ENCODE measurements at regions of chr14 and their contacts with region 1.

Region 1: GRCh38 chr14:95442633-95443021 is 73.8 kb downstream of the SYNE3 start:
- DNase-seq: peak; percentile 76
- H3K4me3 ChIP-seq: no peak overlapping the region
- H3K27ac ChIP-seq: no peak overlapping the region
- H3K4me1 ChIP-seq: no peaks in the 10 kb centered on the region
- H3K27me3 ChIP-seq: no peaks in the 10 kb centered on the region
- CTCF ChIP-seq: peak; percentile 91
- POLR2A ChIP-seq: no peak

Region 2: GRCh38 chr14:95431199-95432143 is 11.2 kb before region 1 on chr14:
- CTCF ChIA-PET with region 1: interaction called, 28 read pairs
- POLR2A ChIA-PET with region 1: no interaction called
- dilution Hi-C with region 1: no loop called
- intact Hi-C with region 1: no loop called
- DNase-seq: peak; percentile 27
- H3K4me3 ChIP-seq: no peak overlapping the region
- H3K27ac ChIP-seq: no peak overlapping the region
- H3K4me1 ChIP-seq: no peaks in the 10 kb centered on the region
- H3K27me3 ChIP-seq: no peaks in the 10 kb centered on the region
- CTCF ChIP-seq: peak; percentile 40 to 50
- POLR2A ChIP-seq: no peak

Region 3: GRCh38 chr14:95483309-95484165 is 40.9 kb after region 1 on chr14:
- CTCF ChIA-PET with region 1: interaction called, 18 read pairs
- POLR2A ChIA-PET with region 1: no interaction called
- dilution Hi-C with region 1: no loop called
- intact Hi-C with region 1: no loop called
- DNase-seq: peak; percentile 98
- H3K4me3 ChIP-seq: no peak overlapping the region
- H3K27ac ChIP-seq: peak overlapping the region; percentile 18
- H3K4me1 ChIP-seq: peaks cover 13% of the 10 kb centered on the region
- H3K27me3 ChIP-seq: no peaks in the 10 kb centered on the region
- CTCF ChIP-seq: no peak
- POLR2A ChIP-seq: no peak

Region 4: DNA sequence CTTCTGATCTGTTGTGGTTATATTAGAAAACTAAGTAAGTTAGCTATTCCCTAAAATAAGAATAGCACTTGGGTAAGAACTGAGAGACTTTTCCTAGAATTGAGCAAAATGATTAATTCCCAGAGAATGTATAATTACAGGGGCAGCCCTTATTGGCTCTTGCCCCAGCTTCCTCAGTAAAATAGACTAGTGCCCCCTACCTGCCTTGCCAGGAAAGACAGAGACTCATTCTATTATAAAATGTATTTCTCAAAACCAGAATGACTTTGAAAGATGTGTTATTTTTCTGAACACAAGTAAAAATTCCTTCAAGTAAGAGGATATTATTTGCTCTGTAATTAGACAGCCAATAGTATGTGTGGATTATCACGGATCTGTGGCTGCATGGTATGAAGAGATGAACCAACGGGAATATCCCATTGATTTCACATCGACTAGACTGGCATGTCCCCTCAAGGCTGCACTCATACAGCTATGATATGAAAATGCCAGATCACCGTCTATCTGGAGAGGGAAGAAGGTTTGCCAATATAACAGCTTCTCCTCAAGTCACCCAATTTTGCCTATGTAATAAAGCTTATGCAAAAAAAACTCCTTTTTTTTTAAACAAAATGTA is 84.9 kb after region 1 on chr14:
- CTCF ChIA-PET with region 1: interaction called, 164 read pairs
- POLR2A ChIA-PET with region 1: interaction called, 3 read pairs
- dilution Hi-C with region 1: no loop called
- intact Hi-C with region 1: loop called (anchors 1 kb)
- DNase-seq: no peak
- H3K4me3 ChIP-seq: peak overlapping the region in 1 of 3 experiments; percentile 4
- H3K27ac ChIP-seq: peak overlapping the region; percentile 72
- H3K4me1 ChIP-seq: peaks cover 53% of the 10 kb centered on the region
- H3K27me3 ChIP-seq: no peaks in the 10 kb centered on the region
- CTCF ChIP-seq: peak; percentile 60 to 63
- POLR2A ChIP-seq: no peak

Region 5: GRCh38 chr14:95561001-95561412 is 118.4 kb after region 1 on chr14:
- CTCF ChIA-PET with region 1: interaction called, 21 read pairs
- POLR2A ChIA-PET with region 1: no interaction called
- dilution Hi-C with region 1: no loop called
- intact Hi-C with region 1: loop called (anchors 1 kb)
- DNase-seq: peak; percentile 86
- H3K4me3 ChIP-seq: no peak overlapping the region
- H3K27ac ChIP-seq: no peak overlapping the region
- H3K4me1 ChIP-seq: no peaks in the 10 kb centered on the region
- H3K27me3 ChIP-seq: no peaks in the 10 kb centered on the region
- CTCF ChIP-seq: peak; percentile 90 to 96
- POLR2A ChIP-seq: no peak

Region 6: DNA sequence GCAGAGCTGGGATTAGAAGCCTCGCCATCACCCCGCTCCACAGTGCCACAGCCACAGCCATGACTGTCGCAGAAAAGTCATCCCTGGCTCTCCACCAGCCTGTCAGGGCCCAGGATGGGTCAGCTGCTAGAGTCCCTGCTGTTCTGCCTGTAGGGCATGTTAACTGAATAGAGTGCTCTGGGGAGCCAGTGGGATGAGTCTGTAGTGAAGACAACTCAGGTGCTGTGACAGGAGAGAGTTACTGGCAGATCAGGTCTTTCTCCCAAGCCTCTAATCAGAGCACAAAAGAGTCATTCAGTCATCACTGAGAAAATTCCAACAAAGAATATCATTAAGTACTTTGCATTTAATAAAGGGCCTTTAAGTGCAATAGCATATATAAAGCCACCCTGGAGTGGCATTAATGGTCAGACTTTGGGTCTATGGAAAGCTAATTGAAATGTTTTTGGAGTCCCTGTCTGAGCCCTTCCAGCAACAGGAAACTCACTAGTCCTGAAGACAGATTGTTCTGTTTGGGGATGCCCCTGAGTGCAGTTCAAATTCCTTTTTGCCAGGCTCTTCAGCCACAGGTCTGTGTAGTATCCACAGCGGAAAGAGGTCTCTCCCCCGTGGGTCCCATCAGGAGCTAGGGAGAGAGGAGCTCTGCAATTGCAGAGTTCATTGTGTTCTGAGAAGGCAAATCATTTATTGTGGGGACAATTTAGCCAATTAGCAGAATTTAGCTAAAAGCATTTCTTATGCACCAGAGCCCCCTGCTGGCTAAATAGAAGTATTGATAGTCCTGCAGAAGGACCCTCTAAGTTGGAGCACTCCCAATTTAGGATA is 551.4 kb after region 1 on chr14:
- CTCF ChIA-PET with region 1: interaction called, 12 read pairs
- POLR2A ChIA-PET with region 1: no interaction called
- dilution Hi-C with region 1: no loop called
- intact Hi-C with region 1: no loop called
- DNase-seq: peak; percentile 40
- H3K4me3 ChIP-seq: no peak overlapping the region
- H3K27ac ChIP-seq: no peak overlapping the region
- H3K4me1 ChIP-seq: no peaks in the 10 kb centered on the region
- H3K27me3 ChIP-seq: no peaks in the 10 kb centered on the region
- CTCF ChIP-seq: peak; percentile 62 to 67
- POLR2A ChIP-seq: no peak